ENCODE measurements at regions of chr18 and their contacts with region 1.

Region 1: DNA sequence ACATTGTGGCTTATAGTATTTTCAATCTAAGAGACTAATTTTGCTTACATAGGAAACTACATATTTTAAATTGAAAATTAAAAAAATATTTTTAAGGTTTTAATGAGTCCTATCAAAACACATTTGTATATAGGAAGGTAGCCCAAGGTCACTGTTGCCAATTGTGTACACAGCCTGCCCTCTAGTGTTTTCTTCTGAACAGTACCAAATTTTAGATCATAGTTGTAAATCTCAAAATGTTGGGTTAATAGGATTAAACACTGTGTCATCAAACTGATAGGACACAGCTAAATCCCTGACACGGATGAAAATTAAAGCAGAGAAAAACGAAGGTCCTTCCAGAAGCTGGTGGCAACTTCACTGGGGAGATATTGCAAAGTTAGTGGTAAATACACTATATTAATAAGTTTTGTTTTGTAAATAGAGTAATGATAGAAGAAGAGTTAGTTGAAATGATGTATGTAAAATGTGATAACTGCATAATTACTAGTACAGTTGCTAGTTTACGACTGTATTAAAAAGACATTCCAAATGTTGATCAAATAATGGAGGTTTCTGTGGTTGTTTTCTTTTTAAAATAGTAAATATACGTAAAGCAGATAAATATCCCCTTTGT is 19.7 kb downstream of the CLUL1 start:
- DNase-seq: no peak
- H3K4me3 ChIP-seq: no peak overlapping the region
- H3K27ac ChIP-seq: no peak overlapping the region
- H3K27me3 ChIP-seq: peaks cover 29% of the 10 kb centered on the region
- CTCF ChIP-seq: peak; percentile 78

Region 2: GRCh38 chr18:267688-268552 is 348.6 kb before region 1 on chr18 and contains the start of gene THOC1:
- CTCF ChIA-PET with region 1: interaction called, 10 read pairs
- POLR2A ChIA-PET with region 1: no interaction called
- DNase-seq: peak; percentile 79
- H3K4me3 ChIP-seq: peak within 1 kb of the TSS; percentile 93
- H3K27ac ChIP-seq: peak within 1 kb of the TSS; percentile 91
- H3K27me3 ChIP-seq: no peaks in the 10 kb centered on the region
- CTCF ChIP-seq: 0 out of 2 replicates have a peak, but pooled peaks have one; percentile 1
- polyA plus RNA-seq, gene THOC1: 22.2 and 35.1 TPM in 2 replicates

Region 3: GRCh38 chr18:286515-287310 is 329.8 kb before region 1 on chr18:
- CTCF ChIA-PET with region 1: interaction called, 12 read pairs
- POLR2A ChIA-PET with region 1: no interaction called
- DNase-seq: no peak
- H3K4me3 ChIP-seq: no peak overlapping the region
- H3K27ac ChIP-seq: no peak overlapping the region
- H3K27me3 ChIP-seq: peaks cover 8% of the 10 kb centered on the region
- CTCF ChIP-seq: peak; percentile 78

Region 4: DNA sequence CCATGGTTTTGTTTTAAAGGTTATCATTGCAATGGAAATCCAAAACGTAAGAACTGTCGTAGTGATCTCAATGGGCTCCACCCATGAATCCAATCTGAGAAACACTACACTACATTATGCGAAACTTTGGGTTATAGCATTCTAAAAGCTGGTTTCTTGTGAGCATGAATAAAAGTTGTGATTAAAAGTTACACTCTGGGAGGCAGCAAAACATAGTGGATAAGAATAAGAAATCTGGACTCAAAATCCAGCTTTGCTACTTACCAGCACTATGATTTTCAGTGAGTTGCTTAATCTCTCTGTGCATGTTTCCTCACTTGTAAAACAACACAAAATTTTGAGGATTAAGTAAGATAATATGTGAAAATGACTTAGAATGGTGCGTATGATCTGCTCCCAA is 323.0 kb before region 1 on chr18:
- CTCF ChIA-PET with region 1: interaction called, 17 read pairs
- POLR2A ChIA-PET with region 1: no interaction called
- DNase-seq: no peak
- H3K4me3 ChIP-seq: no peak overlapping the region
- H3K27ac ChIP-seq: no peak overlapping the region
- H3K27me3 ChIP-seq: peaks cover 29% of the 10 kb centered on the region
- CTCF ChIP-seq: peak; percentile 21